Activated CD8-positive, alpha-beta T cell treated with anti-CD3 and anti-CD28 coated beads, Interleukin-2, amount 10 ng/mL, durations not matched to agents 7 days and 5 days (primary cell): ENCODE measurements at regions of chr5 and their contacts with region 1.

Region 1: GRCh38 chr5:177362610-177363507 is 5.1 kb downstream of the RGS14 start:
- DNase-seq: peak; percentile 66
- ATAC-seq: peak; percentile 62
- H3K4me3 Mint-ChIP-seq: peak overlapping the region; percentile 79
- H3K27ac Mint-ChIP-seq: peak overlapping the region; percentile 41
- H3K4me1 Mint-ChIP-seq: peaks cover 70% of the 10 kb centered on the region
- H3K27me3 Mint-ChIP-seq: no peaks in the 10 kb centered on the region

Region 2: GRCh38 chr5:177351385-177352329 is 11.2 kb before region 1 on chr5 and contains the start of gene LMAN2:
- CTCF ChIA-PET with region 1: interaction called, 7 read pairs
- POLR2A ChIA-PET with region 1: interaction called, 22 read pairs
- DNase-seq: peak; percentile 96
- ATAC-seq: peak; percentile 99
- H3K4me3 Mint-ChIP-seq: peak within 1 kb of the TSS; percentile 97
- H3K27ac Mint-ChIP-seq: peak within 1 kb of the TSS; percentile 100
- H3K4me1 Mint-ChIP-seq: peaks cover 66% of the 10 kb centered on the region
- H3K27me3 Mint-ChIP-seq: no peaks in the 10 kb centered on the region
- total RNA-seq, gene LMAN2: 119 to 127 TPM